ENCODE measurements at regions of chr3 and their contacts with region 1.

Region 1: DNA sequence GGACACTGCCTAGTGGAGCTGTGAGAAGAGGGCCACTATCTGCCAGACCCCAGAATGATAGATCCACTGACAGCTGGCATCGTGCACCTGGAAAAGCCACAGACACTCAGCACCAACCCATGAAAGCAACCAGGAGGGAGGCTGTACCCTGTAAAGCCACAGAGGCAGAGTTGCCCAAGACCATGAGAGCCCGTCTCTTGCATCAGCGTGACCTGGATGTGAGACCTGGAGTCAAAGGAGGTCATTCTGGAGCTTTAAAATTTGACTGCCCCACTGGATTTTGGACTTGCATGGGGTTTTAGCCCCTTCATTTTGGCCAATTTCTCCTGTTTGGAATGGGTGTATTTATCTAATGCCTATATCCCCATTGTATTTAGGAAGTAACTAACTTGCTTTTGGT is 83.5 kb upstream of the P3H2 start:
- DNase-seq: no peak
- H3K4me3 ChIP-seq: no peak overlapping the region
- H3K27ac ChIP-seq: no peak overlapping the region
- H3K4me1 ChIP-seq: no peaks in the 10 kb centered on the region
- H3K27me3 ChIP-seq: no peaks in the 10 kb centered on the region
- CTCF ChIP-seq: no peak

Region 2: GRCh38 chr3:189961525-189962161 is 242.6 kb before region 1 on chr3:
- intact Hi-C with region 1: loop called (anchors 5 kb)
- DNase-seq: peak in 4 of 5 donors; percentile 74 to 91 (median 84)
- H3K4me3 ChIP-seq: no peak overlapping the region
- H3K27ac ChIP-seq: no peak overlapping the region
- H3K4me1 ChIP-seq: no peaks in the 10 kb centered on the region
- H3K27me3 ChIP-seq: no peaks in the 10 kb centered on the region
- CTCF ChIP-seq: peak; percentile 92

Region 3: DNA sequence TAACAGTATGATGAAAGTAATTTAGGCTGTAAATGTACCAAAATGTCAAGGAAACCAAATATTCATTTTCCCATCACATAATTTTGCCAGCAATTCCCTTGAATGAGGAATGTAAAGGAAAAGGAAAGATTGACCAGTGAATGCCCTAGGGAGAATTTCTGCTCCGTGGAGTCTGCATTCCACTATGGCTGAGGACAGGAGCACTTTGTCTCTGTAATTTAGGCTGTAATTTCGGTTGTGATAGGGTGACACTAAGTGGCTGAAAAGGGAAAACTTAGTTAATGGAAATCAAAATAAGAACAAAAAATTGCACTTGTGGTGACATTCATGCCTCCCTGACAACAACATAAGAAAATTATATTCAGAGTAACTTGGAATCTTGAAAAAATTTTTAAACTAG is 253.8 kb after region 1 on chr3:
- intact Hi-C with region 1: no loop called
- DNase-seq: peak in 2 of 5 donors; percentile 37 to 55
- H3K4me3 ChIP-seq: peak overlapping the region in 1 of 3 donors; percentile 16
- H3K27ac ChIP-seq: no peak overlapping the region
- H3K4me1 ChIP-seq: no peaks in the 10 kb centered on the region
- H3K27me3 ChIP-seq: peaks cover 2% of the 10 kb centered on the region
- CTCF ChIP-seq: peak; percentile 4